Activated CD4-positive, alpha-beta T cell treated with anti-CD3 and anti-CD28 coated beads for 36 hours (primary cell): ENCODE measurements at regions of chr12 and their contacts with region 1.

Region 1: GRCh38 chr12:7188562-7189397 is 706 bp upstream of the PEX5 start:
- DNase-seq: peak; percentile 88
- ATAC-seq: peak; percentile 64
- H3K4me3 Mint-ChIP-seq: peak overlapping the region; percentile 85
- H3K27ac Mint-ChIP-seq: peak overlapping the region; percentile 94
- H3K4me1 Mint-ChIP-seq: peaks cover 35% of the 10 kb centered on the region
- H3K27me3 Mint-ChIP-seq: no peaks in the 10 kb centered on the region

Region 2: GRCh38 chr12:6662906-6663742 is 525.7 kb before region 1 on chr12 and contains the start of gene ING4:
- CTCF ChIA-PET with region 1: no interaction called
- POLR2A ChIA-PET with region 1: no interaction called
- intact Hi-C with region 1: loop called in 1 of 2 experiments (anchors 2 kb)
- DNase-seq: peak; percentile 98
- ATAC-seq: peak; percentile 98
- H3K4me3 Mint-ChIP-seq: peak within 1 kb of the TSS; percentile 84
- H3K27ac Mint-ChIP-seq: peak within 1 kb of the TSS; percentile 91
- H3K4me1 Mint-ChIP-seq: peaks cover 24% of the 10 kb centered on the region
- H3K27me3 Mint-ChIP-seq: no peaks in the 10 kb centered on the region
- total RNA-seq, gene ING4: 14.9 to 17.6 TPM

Region 3: DNA sequence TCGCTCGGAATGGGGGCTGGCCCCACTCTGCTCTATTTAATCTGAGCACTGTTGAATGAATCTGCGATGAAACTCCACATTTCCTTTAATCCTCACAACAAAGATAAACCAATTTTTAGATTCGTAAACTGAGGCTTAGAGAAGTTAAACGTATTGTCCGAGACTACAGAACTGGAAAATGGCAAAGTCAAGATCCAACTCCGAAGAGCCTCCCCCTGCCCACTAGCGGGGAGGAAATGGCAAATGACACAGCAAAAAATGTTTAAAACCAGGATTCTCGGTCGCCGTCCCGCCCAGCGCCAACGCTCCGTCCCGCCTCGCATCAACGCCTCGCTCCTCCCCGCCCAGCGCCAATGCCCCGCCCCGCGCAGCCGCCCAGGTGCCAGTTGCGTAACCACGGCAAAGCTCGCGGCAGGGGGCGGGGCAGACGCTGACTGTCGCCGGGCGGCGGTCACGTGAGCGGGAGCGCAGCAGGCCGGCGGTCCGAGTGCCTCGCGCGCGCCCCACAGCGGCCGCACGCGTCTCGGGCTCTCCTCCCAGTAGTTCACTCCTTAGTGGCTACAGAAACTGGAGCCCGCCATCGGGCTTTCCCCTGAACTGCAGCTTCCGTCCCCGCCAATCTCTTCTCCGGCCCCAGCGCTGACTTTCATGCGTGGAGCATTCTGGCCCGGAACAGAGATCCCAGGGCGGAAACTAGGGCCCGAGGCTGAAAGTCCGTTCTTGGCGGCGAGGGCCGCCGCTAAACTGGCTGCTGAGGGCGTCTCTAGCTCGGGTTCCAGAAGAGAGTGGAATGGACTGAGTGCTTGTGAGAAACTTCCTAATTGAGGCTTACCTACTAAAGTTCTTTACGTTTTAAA is 297.8 kb before region 1 on chr12:
- CTCF ChIA-PET with region 1: no interaction called
- POLR2A ChIA-PET with region 1: no interaction called
- intact Hi-C with region 1: loop called in 1 of 2 experiments (anchors 1 kb)
- DNase-seq: peak; percentile 100
- ATAC-seq: peak; percentile 94
- H3K4me3 Mint-ChIP-seq: peak overlapping the region; percentile 87
- H3K27ac Mint-ChIP-seq: peak overlapping the region; percentile 94
- H3K4me1 Mint-ChIP-seq: peaks cover 12% of the 10 kb centered on the region
- H3K27me3 Mint-ChIP-seq: no peaks in the 10 kb centered on the region

Region 4: GRCh38 chr12:6944381-6945186 is 244.2 kb before region 1 on chr12:
- CTCF ChIA-PET with region 1: no interaction called
- POLR2A ChIA-PET with region 1: no interaction called
- intact Hi-C with region 1: loop called in 1 of 2 experiments (anchors 1 kb)
- DNase-seq: peak; percentile 94
- ATAC-seq: peak; percentile 54
- H3K4me3 Mint-ChIP-seq: peak overlapping the region; percentile 81
- H3K27ac Mint-ChIP-seq: peak overlapping the region; percentile 97
- H3K4me1 Mint-ChIP-seq: peaks cover 59% of the 10 kb centered on the region
- H3K27me3 Mint-ChIP-seq: no peaks in the 10 kb centered on the region

Region 5: DNA sequence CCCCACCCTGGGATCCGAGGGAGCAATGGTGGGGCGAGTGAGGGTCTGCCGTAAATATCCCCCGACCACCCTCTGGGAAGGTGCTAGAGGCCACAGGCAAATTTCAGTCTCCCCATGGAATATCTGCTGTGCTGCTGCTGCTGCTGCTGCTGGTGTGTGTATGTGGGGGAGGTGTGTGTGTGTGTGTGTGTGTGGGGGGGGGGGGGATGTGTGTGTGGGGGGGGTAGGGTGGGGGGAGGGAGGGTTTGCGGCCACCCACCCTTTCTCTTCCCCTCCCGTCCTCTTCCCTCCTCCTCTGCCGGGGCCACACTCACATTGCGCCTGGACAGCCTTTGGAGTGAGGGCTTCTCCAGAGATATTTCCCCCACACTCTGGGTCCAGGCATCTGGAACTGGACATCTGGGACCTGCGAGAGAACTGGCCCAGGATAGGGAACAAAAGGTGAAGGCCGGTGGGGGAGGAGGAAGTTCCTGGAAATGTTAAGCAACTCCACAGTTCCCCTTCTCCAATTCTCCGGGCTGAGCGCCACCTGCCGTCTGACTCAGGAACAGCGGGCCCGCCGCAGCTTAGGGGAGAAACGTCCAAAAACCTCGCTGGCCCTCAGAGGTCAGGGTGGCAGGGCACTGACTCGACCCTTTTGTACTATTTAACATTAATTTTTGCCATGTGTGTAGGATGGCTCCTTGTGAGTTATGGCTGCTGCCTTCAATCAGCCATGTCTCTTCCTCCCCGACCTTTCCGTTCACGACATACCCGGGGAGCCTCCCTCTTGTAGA is 79.8 kb before region 1 on chr12 and contains the start of gene C1RL:
- CTCF ChIA-PET with region 1: interaction called, 3 read pairs
- POLR2A ChIA-PET with region 1: no interaction called
- intact Hi-C with region 1: loop called in 1 of 2 experiments (anchors 1 kb)
- DNase-seq: peak; percentile 90
- ATAC-seq: peak; percentile 33
- H3K4me3 Mint-ChIP-seq: peak within 1 kb of the TSS; percentile 92
- H3K27ac Mint-ChIP-seq: peak within 1 kb of the TSS; percentile 94
- H3K4me1 Mint-ChIP-seq: peaks cover 43% of the 10 kb centered on the region
- H3K27me3 Mint-ChIP-seq: no peaks in the 10 kb centered on the region
- total RNA-seq, gene C1RL: 17.3 to 18.9 TPM

Region 6: GRCh38 chr12:7142056-7142644 is 46.6 kb before region 1 on chr12:
- CTCF ChIA-PET with region 1: interaction called, 5 read pairs
- POLR2A ChIA-PET with region 1: no interaction called
- intact Hi-C with region 1: loop called (anchors 1 kb)
- DNase-seq: peak; percentile 74
- ATAC-seq: peak; percentile 93
- H3K4me3 Mint-ChIP-seq: no peak overlapping the region
- H3K27ac Mint-ChIP-seq: no peak overlapping the region
- H3K4me1 Mint-ChIP-seq: no peaks in the 10 kb centered on the region
- H3K27me3 Mint-ChIP-seq: no peaks in the 10 kb centered on the region

Region 7: DNA sequence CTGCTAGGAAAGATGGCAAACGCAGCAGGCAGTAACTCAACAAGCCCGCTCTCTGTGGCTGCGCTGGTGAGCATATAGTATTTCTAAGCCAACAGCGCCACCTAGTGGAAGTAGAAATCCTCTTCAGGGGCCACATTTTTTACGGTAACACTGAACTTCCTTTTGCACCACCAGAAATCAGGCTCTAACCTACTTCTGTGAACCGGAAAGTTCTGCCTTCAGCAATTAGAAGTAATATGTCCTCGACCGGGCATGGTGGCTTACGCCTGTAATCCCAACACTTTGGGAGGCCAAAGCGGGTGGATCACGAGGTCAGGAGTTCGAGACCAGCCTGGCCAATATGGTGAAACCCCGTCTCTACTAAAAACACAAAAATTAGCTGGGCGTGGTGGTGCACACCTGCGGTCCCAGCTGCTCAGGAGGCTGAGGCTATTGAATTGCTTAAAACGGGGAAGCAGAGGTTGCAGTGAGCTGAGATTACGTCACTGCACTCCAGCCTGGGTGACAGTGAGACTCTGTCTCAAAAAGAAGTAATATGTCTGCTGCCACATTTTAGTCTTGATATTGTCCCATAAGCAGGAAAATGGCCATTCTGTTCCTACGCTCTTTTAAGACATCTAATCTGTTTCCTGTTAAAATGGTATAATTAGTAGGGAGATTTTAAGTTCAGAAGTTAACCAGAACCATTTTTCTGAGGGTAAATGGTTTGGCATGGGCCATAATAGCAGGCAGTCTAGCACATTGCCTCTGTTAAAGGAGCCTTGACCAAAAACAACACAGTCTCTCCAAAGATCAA is 450.2 kb after region 1 on chr12:
- CTCF ChIA-PET with region 1: interaction called, 5 read pairs
- POLR2A ChIA-PET with region 1: no interaction called
- intact Hi-C with region 1: loop called in 1 of 2 experiments (anchors 1 kb)
- DNase-seq: peak; percentile 84
- ATAC-seq: peak; percentile 87
- H3K4me3 Mint-ChIP-seq: peak overlapping the region; percentile 57
- H3K27ac Mint-ChIP-seq: peak overlapping the region; percentile 86
- H3K4me1 Mint-ChIP-seq: peaks cover 23% of the 10 kb centered on the region
- H3K27me3 Mint-ChIP-seq: peaks cover 6% of the 10 kb centered on the region